Thyroid gland (tissue), 4 donors: ENCODE measurements at regions of chr6 and their contacts with region 1.

Region 1: GRCh38 chr6:13711733-13712598 is at the start of gene RANBP9:
- DNase-seq: peak; percentile 90 to 91
- H3K4me3 ChIP-seq: peak within 1 kb of the TSS; percentile 42 to 72 (median 68)
- H3K27ac ChIP-seq: peak within 1 kb of the TSS; percentile 89 to 97 (median 97)
- H3K4me1 ChIP-seq: peaks cover 15 to 20% of the 10 kb centered on the region in 2 donors
- H3K27me3 ChIP-seq: no peaks in the 10 kb centered on the region
- CTCF ChIP-seq: peak in 1 of 6 experiments; percentile 11
- POLR2A ChIP-seq: peak in 1 of 2 donors; percentile 81
- total RNA-seq, gene RANBP9: 26.8 to 42.6 (median 32.4) TPM

Region 2: GRCh38 chr6:13614926-13615798 is 96.8 kb before region 1 on chr6 and contains the start of gene NOL7:
- intact Hi-C with region 1: loop called (anchors 5 kb)
- DNase-seq: peak; percentile 97
- H3K4me3 ChIP-seq: peak within 1 kb of the TSS; percentile 45 to 96 (median 65)
- H3K27ac ChIP-seq: peak within 1 kb of the TSS; percentile 68 to 82 (median 74)
- H3K4me1 ChIP-seq: peaks cover 7 to 32% of the 10 kb centered on the region in 2 donors
- H3K27me3 ChIP-seq: no peaks in the 10 kb centered on the region
- CTCF ChIP-seq: peak; percentile 51 to 98 (median 89)
- POLR2A ChIP-seq: peak; percentile 34 to 93
- total RNA-seq, gene NOL7: 62.9 to 133 (median 101) TPM

Region 3: GRCh38 chr6:13814176-13814937 is 102.4 kb after region 1 on chr6 and contains the start of gene MCUR1:
- intact Hi-C with region 1: loop called (anchors 5 kb)
- DNase-seq: peak; percentile 87 to 90
- H3K4me3 ChIP-seq: peak within 1 kb of the TSS; percentile 50 to 92 (median 70)
- H3K27ac ChIP-seq: peak within 1 kb of the TSS; percentile 87 to 97 (median 94)
- H3K4me1 ChIP-seq: peaks cover 35 to 42% of the 10 kb centered on the region in 2 donors
- H3K27me3 ChIP-seq: no peaks in the 10 kb centered on the region
- CTCF ChIP-seq: peak in 2 of 6 experiments; percentile 20 to 43
- POLR2A ChIP-seq: peak; percentile 84 to 90
- total RNA-seq, gene MCUR1: 22.2 to 30.7 (median 25.5) TPM